ENCODE measurements at regions of chr9 and their contacts with region 1.

Region 1: GRCh38 chr9:97386733-97387503 is 25.0 kb upstream of the TDRD7 start:
- DNase-seq: peak; percentile 88
- H3K4me3 ChIP-seq: peak overlapping the region; percentile 1
- H3K27ac ChIP-seq: no peak overlapping the region
- H3K4me1 ChIP-seq: peaks cover 5% of the 10 kb centered on the region
- H3K27me3 ChIP-seq: no peaks in the 10 kb centered on the region
- CTCF ChIP-seq: peak; percentile 95

Region 2: GRCh38 chr9:97615439-97616072 is 228.6 kb after region 1 on chr9:
- intact Hi-C with region 1: loop called (anchors 5 kb)
- DNase-seq: peak; percentile 72
- H3K4me3 ChIP-seq: no peak overlapping the region
- H3K27ac ChIP-seq: no peak overlapping the region
- H3K4me1 ChIP-seq: no peaks in the 10 kb centered on the region
- H3K27me3 ChIP-seq: no peaks in the 10 kb centered on the region
- CTCF ChIP-seq: peak; percentile 86